ENCODE measurements at regions of chr5 and their contacts with region 1.

Region 1: GRCh38 chr5:5421961-5422818 is at the start of gene ICE1:
- DNase-seq: peak; percentile 96
- ATAC-seq: peak; percentile 94
- H3K4me3 ChIP-seq: peak within 1 kb of the TSS; percentile 91 to 94
- H3K27ac ChIP-seq: peak within 1 kb of the TSS; percentile 84
- H3K4me1 ChIP-seq: peaks cover 19 to 30% of the 10 kb centered on the region in 2 experiments; a peak in 3 of 4 replicates
- H3K27me3 ChIP-seq: no peaks in the 10 kb centered on the region
- CTCF ChIP-seq: no peak
- POLR2A ChIP-seq: peak; percentile 82
- RAD21 ChIP-seq: no peak
- total RNA-seq, gene ICE1: 30.0 TPM

Region 2: DNA sequence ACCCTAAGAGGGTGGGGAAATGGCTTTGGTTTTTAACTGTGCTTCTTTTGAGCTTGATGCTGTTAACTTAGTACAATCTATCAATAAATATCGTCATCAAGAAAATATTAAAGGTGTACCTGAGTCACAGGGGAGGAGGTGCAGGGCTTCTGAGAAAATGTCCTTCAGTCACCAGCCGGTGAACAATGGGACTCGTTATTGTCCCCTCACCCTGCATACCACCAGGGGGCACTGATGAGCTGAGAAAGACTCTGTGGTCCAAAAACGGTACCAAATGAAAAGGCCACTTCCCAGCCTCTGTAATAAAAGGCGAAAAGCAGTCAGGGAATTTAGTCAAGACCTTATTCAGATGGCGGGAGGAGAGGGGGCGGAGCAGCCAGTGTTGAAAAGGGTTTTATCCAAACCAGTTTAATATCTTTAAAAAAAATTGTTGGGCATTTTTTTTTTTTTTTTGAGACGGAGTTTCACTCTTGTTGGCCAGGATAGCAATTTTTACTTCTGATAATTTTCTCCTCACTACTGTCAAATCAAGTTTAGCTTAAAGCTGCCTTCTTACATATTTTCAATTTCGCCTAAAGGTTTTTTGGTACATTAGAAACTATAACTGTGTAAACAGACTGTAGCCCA is 554.0 kb before region 1 on chr5:
- CTCF ChIA-PET with region 1: interaction called, 4 read pairs
- POLR2A ChIA-PET with region 1: no interaction called
- RAD21 ChIA-PET with region 1: no interaction called
- intact Hi-C with region 1: loop called (anchors 1 kb)
- DNase-seq: peak; percentile 37
- ATAC-seq: peak; percentile 87
- H3K4me3 ChIP-seq: no peak overlapping the region
- H3K27ac ChIP-seq: no peak overlapping the region
- H3K4me1 ChIP-seq: no peaks in the 10 kb centered on the region
- H3K27me3 ChIP-seq: no peaks in the 10 kb centered on the region
- CTCF ChIP-seq: peak; percentile 29 to 89 (median 88); a peak in 5 of 6 replicates
- POLR2A ChIP-seq: no peak
- RAD21 ChIP-seq: peak; percentile 49

Region 3: GRCh38 chr5:4879693-4880303 is 542.4 kb before region 1 on chr5:
- CTCF ChIA-PET with region 1: interaction called, 14 read pairs
- POLR2A ChIA-PET with region 1: no interaction called
- RAD21 ChIA-PET with region 1: no interaction called
- intact Hi-C with region 1: loop called (anchors 1 kb)
- DNase-seq: peak; percentile 39
- ATAC-seq: peak; percentile 92
- H3K4me3 ChIP-seq: no peak overlapping the region
- H3K27ac ChIP-seq: no peak overlapping the region
- H3K4me1 ChIP-seq: no peaks in the 10 kb centered on the region
- H3K27me3 ChIP-seq: peaks cover 5% of the 10 kb centered on the region; the same call in 1 of the 2 replicates
- CTCF ChIP-seq: peak; percentile 53 to 90 (median 89); a peak in 5 of 6 replicates
- POLR2A ChIP-seq: no peak
- RAD21 ChIP-seq: peak; percentile 83

Region 4: GRCh38 chr5:5141625-5142532 is 280.3 kb before region 1 on chr5:
- CTCF ChIA-PET with region 1: interaction called, 4 read pairs
- POLR2A ChIA-PET with region 1: interaction called, 7 read pairs
- RAD21 ChIA-PET with region 1: no interaction called
- intact Hi-C with region 1: loop called (anchors 1 kb)
- DNase-seq: peak; percentile 45
- ATAC-seq: peak; percentile 26; the same call in 1 of the 2 replicates
- H3K4me3 ChIP-seq: no peak overlapping the region
- H3K27ac ChIP-seq: no peak overlapping the region
- H3K4me1 ChIP-seq: peaks cover 10 to 20% of the 10 kb centered on the region in 2 experiments; a peak in 3 of 4 replicates
- H3K27me3 ChIP-seq: no peaks in the 10 kb centered on the region
- CTCF ChIP-seq: peak; percentile 60 to 78 (median 77)
- POLR2A ChIP-seq: no peak
- RAD21 ChIP-seq: peak; percentile 84

Region 5: GRCh38 chr5:5340206-5340729 is 81.9 kb before region 1 on chr5:
- CTCF ChIA-PET with region 1: no interaction called
- POLR2A ChIA-PET with region 1: no interaction called
- RAD21 ChIA-PET with region 1: no interaction called
- intact Hi-C with region 1: loop called (anchors 5 kb)
- DNase-seq: peak; percentile 80
- ATAC-seq: peak; percentile 92
- H3K4me3 ChIP-seq: no peak overlapping the region; a peak in 1 of 4 replicates
- H3K27ac ChIP-seq: peak overlapping the region; percentile 31
- H3K4me1 ChIP-seq: peaks cover 28 to 36% of the 10 kb centered on the region in 2 experiments
- H3K27me3 ChIP-seq: no peaks in the 10 kb centered on the region
- CTCF ChIP-seq: peak; percentile 32 to 74 (median 73); a peak in 5 of 6 replicates
- POLR2A ChIP-seq: no peak
- RAD21 ChIP-seq: peak; percentile 55

Region 6: GRCh38 chr5:5398046-5398445 is 24.1 kb before region 1 on chr5:
- CTCF ChIA-PET with region 1: interaction called, 10 read pairs
- POLR2A ChIA-PET with region 1: no interaction called
- RAD21 ChIA-PET with region 1: interaction called in 1 of 2 experiments, 4 read pairs
- intact Hi-C with region 1: no loop called
- DNase-seq: no peak
- ATAC-seq: no peak
- H3K4me3 ChIP-seq: no peak overlapping the region
- H3K27ac ChIP-seq: no peak overlapping the region
- H3K4me1 ChIP-seq: peaks cover 0 to 9% of the 10 kb centered on the region in 2 experiments; a peak in 3 of 4 replicates
- H3K27me3 ChIP-seq: no peaks in the 10 kb centered on the region
- CTCF ChIP-seq: no peak
- POLR2A ChIP-seq: no peak
- RAD21 ChIP-seq: no peak

Region 7: GRCh38 chr5:5770825-5771224 is 348.6 kb after region 1 on chr5:
- CTCF ChIA-PET with region 1: no interaction called
- POLR2A ChIA-PET with region 1: no interaction called
- RAD21 ChIA-PET with region 1: no interaction called
- intact Hi-C with region 1: no loop called
- DNase-seq: no peak
- ATAC-seq: no peak
- H3K4me3 ChIP-seq: no peak overlapping the region
- H3K27ac ChIP-seq: no peak overlapping the region
- H3K4me1 ChIP-seq: no peaks in the 10 kb centered on the region
- H3K27me3 ChIP-seq: no peaks in the 10 kb centered on the region
- CTCF ChIP-seq: no peak
- POLR2A ChIP-seq: no peak
- RAD21 ChIP-seq: no peak

Measured in HCT116 (cell line).